HEK293T (cell line): ENCODE measurements at regions of chr6 and their contacts with region 1.

Region 1: DNA sequence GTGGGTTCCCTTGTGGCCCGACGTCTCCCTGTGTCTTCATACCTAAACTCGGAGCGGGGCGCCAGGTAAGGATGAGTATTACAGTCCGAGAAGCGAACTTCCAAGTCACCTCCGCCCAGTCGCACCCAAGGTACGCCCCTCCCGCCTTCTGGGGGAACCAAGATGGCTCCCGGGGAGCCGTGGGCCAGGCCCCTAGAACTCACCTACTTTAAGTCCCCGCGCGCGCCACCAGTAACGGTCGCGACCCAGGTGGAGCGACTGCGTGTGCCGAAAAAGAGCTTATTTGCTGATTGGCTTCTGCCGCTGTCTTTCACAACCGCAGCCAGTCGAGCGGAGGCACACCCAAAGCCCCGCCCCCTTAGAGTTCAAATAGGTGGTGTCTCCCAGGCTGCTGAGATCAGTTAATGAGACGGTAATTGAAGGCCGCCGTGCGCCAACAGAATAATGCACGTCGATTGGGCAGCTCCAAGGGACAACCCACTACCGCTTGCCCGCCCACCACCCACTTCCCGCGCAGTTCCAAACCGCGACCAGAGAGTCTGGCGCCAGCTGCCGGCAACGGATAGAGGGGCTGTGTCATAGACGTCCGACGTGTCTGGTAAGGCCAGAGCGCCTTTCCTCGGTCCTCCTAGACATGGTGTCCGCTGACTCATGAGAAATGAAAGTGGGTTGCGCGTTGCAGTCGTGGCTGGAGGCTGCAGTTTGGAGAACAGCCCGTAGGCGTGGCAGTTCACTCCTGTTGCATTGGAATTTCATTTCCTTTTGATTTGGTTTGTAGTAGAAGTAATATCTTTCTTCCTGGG is at the start of gene MDC1:
- DNase-seq: peak; percentile 94

Region 2: GRCh38 chr6:30672445-30673253 is 44.6 kb before region 1 on chr6 and contains the start of gene DHX16:
- CTCF ChIA-PET with region 1: interaction called, 5 read pairs
- POLR2A ChIA-PET with region 1: interaction called, 11 read pairs
- DNase-seq: peak; percentile 88

Region 3: GRCh38 chr6:30678964-30679726 is 38.1 kb before region 1 on chr6:
- CTCF ChIA-PET with region 1: interaction called, 33 read pairs
- POLR2A ChIA-PET with region 1: interaction called, 25 read pairs
- DNase-seq: peak; percentile 85

Region 4: GRCh38 chr6:30686908-30687658 is 30.2 kb before region 1 on chr6:
- CTCF ChIA-PET with region 1: interaction called, 33 read pairs
- POLR2A ChIA-PET with region 1: interaction called, 101 read pairs
- DNase-seq: peak; percentile 54

Region 5: DNA sequence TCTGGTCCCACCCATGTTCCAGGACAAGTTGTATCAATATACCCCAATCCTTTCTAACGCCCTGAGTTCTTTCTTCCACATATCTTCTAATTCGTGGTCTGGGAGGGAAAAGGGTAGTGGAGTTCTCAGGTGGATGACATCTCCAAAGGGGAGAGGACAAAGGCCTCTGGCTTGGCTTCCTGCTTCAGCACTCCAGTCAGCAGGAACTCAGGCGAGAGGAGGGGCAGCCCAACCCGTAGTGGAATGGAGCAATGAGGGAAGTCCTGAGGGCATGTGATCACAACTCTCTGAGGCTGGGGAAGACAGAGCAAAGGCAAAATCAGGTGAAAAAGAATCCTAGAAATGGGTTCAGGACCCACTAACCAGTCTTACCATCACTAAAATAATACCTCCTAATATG is 16.9 kb before region 1 on chr6:
- CTCF ChIA-PET with region 1: interaction called, 7 read pairs
- POLR2A ChIA-PET with region 1: interaction called, 42 read pairs
- DNase-seq: no peak

Region 6: DNA sequence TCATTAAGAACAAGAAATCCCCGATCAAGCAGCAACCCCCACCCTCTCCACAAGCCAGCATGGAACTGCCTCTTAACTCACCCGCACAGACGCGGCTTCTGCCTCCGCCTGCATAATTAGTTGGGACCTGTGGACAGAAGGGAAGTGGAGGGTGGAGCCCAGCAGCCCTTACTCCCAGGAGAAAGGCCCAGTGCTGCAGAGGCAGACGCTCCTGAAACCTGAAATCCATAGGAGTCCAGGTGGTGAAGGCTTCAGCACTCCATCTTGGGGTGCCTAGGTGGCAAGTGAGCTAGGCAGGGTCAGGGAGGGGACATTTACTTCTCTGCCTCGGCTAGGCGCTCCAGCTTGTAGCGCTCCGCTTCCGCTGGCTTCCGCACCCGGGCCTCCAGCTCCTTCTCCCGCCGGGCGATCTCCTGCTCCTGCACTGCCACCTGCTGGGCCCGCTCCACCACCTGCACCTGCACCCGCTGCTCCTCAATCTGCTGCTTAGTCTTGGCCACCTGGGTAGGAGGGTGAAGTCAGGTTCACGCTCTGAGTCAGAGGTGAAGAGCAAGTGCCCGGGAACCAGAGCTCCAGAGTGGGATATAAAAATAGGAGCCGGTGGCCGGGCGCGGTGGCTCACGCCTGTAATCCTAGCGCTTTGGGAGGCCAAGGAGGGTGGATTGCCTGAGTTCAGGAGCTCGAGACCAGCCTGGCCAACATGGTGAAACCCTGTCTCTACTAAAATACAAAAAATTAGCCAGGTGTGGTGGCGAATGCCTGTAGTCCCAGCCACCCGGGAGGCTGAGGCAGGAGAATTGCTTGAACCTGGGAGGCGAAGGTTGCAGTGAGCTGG is 13.6 kb after region 1 on chr6:
- CTCF ChIA-PET with region 1: interaction called, 13 read pairs
- POLR2A ChIA-PET with region 1: interaction called, 23 read pairs
- DNase-seq: peak; percentile 72